GM18951 (cell line): ENCODE measurements at regions of chr15 and their contacts with region 1.

Region 1: GRCh38 chr15:100873029-100873677 is 6.5 kb upstream of the ALDH1A3 start:
- POLR2A ChIP-seq: no peak

Region 2: GRCh38 chr15:100635406-100636071 is 237.6 kb before region 1 on chr15:
- in situ Hi-C with region 1: loop called (anchors 10 kb)
- POLR2A ChIP-seq: no peak